ENCODE measurements at regions of chr10 and their contacts with region 1.

Region 1: GRCh38 chr10:29635711-29636144 is 957 bp upstream of the SVIL start:
- DNase-seq: peak in 2 of 9 donors; percentile 5 to 13
- ATAC-seq: peak; percentile 56
- H3K4me3 ChIP-seq: no peak overlapping the region
- H3K4me3 Mint-ChIP-seq: peak overlapping the region in 8 of 10 donors; percentile 34 to 67 (median 51)
- H3K27ac ChIP-seq: no peak overlapping the region
- H3K27ac Mint-ChIP-seq: peak overlapping the region in 7 of 9 donors; percentile 21 to 80 (median 32)
- H3K4me1 ChIP-seq: peaks cover 14 to 16% of the 10 kb centered on the region in 2 donors
- H3K4me1 Mint-ChIP-seq: peaks cover 25 to 60% (median 48%) of the 10 kb centered on the region in 7 donors
- H3K27me3 ChIP-seq: no peaks in the 10 kb centered on the region
- H3K27me3 Mint-ChIP-seq: no peaks in the 10 kb centered on the region

Region 2: DNA sequence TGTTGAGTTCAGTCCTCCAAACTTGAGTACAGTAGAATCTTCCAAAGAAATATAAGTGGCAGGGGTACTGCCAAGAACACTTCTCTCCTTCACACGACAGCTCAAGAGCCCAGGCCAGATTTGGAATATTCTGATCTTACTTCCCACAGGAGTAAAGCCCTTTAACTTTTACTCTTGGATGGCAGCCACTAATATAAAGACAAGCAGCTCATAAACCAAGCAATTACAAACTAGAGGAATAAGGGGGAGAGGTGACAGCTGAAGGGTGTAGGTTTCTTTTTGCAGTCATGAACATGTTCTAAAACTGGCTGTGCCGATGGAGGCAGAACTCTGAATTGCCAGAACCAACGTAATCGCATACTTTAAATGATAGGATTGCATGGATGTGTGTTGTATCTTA is 75.7 kb before region 1 on chr10:
- CTCF ChIA-PET with region 1: no interaction called
- POLR2A ChIA-PET with region 1: no interaction called
- intact Hi-C with region 1: no loop called
- DNase-seq: no peak
- ATAC-seq: no peak
- H3K4me3 ChIP-seq: no peak overlapping the region
- H3K4me3 Mint-ChIP-seq: no peak overlapping the region
- H3K27ac ChIP-seq: no peak overlapping the region
- H3K27ac Mint-ChIP-seq: peak overlapping the region in 1 of 9 donors; percentile 9
- H3K4me1 ChIP-seq: no peaks in the 10 kb centered on the region
- H3K4me1 Mint-ChIP-seq: peaks cover 0 to 11% (median 0%) of the 10 kb centered on the region in 7 donors
- H3K27me3 ChIP-seq: no peaks in the 10 kb centered on the region
- H3K27me3 Mint-ChIP-seq: no peaks in the 10 kb centered on the region

Region 3: DNA sequence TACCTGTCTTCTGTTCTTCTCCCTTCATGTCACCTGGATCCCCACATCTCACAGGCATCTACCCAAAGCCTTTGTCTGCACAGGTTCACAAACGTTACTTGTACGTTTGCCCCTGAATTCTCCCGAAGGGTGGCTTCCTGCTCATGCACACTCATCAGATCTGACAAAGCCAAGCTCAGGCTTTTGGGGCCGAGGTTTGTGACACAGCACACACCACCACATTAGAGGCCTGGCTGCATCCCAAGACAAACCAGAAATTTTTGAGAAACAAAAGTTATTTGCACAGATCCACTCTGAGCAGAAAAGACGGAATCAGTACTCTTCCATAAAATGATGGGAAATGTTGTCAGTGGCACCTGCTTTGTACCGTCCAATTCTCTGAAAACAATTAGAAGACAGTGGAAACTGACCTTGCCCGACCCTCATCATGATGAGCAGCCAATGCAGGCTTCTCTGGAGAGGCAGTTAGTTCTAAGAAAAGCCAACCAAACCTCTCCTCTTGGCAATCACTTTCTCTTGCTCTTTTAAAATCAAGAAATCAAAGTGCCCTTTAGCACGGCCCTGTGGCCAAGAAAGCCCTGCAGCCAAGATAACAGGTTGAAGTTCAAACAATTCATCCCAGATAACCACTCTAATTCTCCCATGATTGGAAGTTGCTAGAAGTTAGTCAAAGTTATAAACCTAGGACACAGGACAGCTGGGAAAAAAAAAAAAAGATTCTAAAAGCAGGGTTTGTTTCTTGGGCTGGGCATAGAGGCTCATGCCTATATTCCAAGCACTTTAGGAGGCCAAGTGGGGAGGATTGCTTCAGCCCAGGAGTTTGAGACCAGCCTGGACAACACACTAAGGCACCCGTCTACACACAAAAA is 12.6 kb after region 1 on chr10:
- CTCF ChIA-PET with region 1: interaction called, 4 read pairs
- POLR2A ChIA-PET with region 1: no interaction called
- intact Hi-C with region 1: loop called in 1 of 2 experiments (anchors 1 kb)
- DNase-seq: peak in 7 of 9 donors; percentile 19 to 45 (median 31)
- ATAC-seq: peak; percentile 60
- H3K4me3 ChIP-seq: no peak overlapping the region
- H3K4me3 Mint-ChIP-seq: peak overlapping the region; percentile 21 to 93 (median 72)
- H3K27ac ChIP-seq: no peak overlapping the region
- H3K27ac Mint-ChIP-seq: peak overlapping the region; percentile 68 to 92 (median 76)
- H3K4me1 ChIP-seq: peaks cover 0 to 25% of the 10 kb centered on the region in 2 donors
- H3K4me1 Mint-ChIP-seq: peaks cover 27 to 75% (median 65%) of the 10 kb centered on the region in 7 donors
- H3K27me3 ChIP-seq: no peaks in the 10 kb centered on the region
- H3K27me3 Mint-ChIP-seq: peaks cover 0 to 19% (median 0%) of the 10 kb centered on the region in 5 donors